ENCODE measurements at regions of chr3 and their contacts with region 1.

Region 1: GRCh38 chr3:119293871-119294695 is at the start of gene ARHGAP31:
- DNase-seq: no peak
- H3K4me3 ChIP-seq: peak within 1 kb of the TSS; percentile 89
- CTCF ChIP-seq: no peak

Region 2: DNA sequence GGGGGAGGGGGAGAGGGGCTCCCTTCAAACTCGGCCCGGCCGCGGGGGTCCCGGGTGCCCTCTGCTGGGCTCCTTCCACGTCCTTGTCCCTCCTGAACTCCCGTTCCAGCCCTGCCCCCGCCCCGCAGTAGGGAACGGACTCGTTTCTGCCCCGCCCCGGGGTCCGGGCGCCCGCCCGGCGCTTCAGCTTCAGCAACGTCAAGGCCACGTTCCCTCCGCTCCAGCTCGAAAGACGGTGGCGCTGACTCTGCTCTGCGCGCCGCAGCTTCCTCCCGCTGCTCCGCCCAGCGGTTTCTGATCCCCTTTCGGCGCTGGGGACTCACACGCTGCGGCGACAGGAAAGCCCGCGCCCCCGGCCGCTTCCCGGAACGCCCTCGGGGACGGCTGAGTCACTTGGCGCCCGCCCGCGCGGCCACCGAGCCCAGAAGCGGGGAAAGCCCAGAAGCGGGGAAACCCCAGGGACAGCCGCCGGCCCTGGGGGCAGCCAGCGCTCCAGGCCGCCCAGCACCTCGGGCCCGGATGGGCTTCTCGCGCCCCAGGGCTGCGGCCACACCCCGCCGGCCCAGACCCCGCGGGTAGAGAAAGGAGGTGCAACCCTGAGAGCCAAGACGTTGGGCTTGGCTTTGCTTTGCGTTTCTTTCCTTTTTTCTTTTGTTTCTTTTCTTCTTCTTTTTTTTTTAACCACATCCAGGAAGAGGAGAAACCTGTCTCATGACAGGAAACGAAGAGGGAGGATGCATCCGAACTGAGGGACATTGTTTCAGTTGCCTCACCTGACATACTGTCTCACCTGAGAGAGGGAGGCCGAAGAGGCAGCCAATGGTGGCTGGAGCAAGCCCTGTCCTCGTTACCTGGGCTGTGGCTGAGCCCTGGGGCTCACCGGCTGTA is 29.0 kb after region 1 on chr3:
- CTCF ChIA-PET with region 1: no interaction called
- POLR2A ChIA-PET with region 1: interaction called, 11 read pairs
- DNase-seq: no peak
- H3K4me3 ChIP-seq: peak overlapping the region; percentile 62
- CTCF ChIP-seq: no peak

Region 3: DNA sequence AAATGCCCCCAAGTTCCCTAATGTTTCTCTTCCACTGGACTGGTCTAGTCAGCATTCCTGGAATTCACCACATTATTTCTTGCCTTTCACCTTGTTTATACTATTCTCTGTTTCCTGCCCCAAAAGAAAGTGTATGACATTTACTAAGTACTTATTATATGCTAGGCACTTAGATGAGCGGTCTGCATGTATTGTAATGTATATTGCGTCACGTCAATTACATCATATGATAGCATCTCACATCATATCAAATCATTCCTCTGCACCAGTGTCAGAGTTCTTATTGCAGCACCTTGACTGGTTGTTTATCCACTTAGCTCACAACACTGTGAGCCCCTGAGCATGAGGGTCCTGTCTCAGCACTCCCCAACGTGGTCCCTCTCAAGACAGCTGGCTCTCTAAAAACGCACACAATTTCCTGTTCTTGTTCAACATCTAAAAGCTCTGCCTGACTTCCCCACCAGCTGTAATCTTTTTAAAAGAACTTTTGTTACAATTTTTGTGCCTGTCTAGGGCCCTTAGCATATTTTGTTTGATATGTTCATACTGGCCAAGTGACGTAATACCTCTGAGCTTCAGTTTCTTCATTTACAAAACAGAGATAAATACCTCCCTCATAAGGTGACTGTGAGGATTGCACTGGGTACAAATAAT is 58.9 kb after region 1 on chr3:
- CTCF ChIA-PET with region 1: interaction called, 22 read pairs
- POLR2A ChIA-PET with region 1: no interaction called
- DNase-seq: peak; percentile 52
- H3K4me3 ChIP-seq: no peak overlapping the region
- CTCF ChIP-seq: peak; percentile 26